Right cardiac atrium (tissue), 5 donors: ENCODE measurements at regions of chr5 and their contacts with region 1.

Region 1: DNA sequence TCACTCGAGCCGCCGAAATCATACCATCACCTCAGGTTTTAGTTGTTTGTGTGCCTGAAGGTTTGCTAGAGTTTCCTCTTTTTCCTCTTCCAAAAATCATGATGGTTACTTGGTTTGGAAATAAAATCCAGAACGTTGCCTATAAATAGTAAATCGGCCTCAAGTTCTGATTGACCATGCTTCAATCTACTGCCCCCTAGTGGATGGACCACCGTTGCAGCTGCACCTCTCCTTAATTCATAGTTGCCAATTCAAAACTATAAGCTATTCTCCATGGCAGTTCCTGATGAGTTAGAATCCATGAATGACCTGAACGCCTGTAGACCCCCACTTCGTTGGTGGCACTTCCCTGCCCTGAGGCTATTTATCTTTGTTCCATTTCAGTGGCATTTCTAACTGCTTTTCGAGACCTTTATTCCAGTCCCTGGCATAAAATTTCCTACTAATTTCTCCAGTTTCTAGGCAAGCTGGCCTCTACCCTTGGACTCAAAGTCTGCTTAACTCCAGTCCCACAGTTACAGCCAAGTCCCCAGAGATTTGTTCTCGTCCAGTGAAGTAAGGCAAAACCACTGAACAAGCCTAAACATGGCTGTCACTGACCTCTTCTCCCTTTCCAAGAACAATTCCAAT is 422.6 kb downstream of the EFNA5 start:
- DNase-seq: peak; percentile 48 to 70 (median 56)
- ATAC-seq: peak in 1 of 2 donors; percentile 29
- H3K4me3 ChIP-seq: no peak overlapping the region
- H3K27ac ChIP-seq: no peak overlapping the region
- H3K4me1 ChIP-seq: no peaks in the 10 kb centered on the region
- H3K27me3 ChIP-seq: no peaks in the 10 kb centered on the region

Region 2: DNA sequence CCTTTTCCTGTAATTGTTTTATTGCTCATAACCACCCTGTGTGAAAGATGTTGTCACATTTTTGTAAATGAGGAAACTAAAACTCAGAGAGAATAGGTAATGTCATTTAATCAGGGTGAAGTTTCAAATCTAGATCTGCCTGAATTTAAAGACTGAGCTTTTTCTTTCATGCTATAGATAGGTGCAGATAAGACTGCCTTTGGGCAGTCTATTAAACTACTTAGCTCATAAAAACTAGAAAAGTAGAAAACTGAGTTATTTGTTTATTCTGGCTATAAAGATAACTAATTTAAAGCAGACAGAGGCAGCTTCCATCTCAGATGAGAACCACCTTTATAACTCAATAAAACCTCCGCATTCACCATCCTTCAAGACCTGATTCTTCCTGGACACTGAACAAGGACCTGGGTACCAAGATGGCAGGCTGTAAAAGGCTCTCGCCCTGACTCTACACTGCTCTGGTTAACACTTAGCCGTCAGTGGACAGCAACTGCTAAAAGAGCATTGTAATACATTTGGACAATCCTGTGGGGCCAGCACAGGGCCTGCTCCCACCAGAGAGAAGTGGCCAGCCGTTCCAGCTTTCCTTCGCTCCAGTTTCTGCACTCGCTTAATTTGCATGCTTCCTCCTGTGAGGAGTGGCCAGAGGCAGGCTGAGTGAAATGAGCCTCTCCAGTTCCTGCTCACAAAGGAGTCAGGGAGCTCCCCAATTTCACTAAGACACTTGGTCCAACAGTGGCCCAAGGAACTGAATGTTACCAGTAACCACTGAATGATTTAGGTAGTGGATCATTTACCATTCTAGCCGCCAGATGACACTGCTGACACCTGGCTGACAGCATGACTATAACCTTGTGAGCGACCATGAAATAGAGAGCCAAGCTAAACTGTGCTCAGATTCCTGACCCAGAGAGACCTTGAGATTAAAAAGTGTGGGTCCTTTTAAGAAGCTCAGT is 143.9 kb before region 1 on chr5:
- intact Hi-C with region 1: loop called in 1 of 4 experiments (anchors 5 kb)
- DNase-seq: peak in 2 of 3 donors; percentile 12 to 43
- ATAC-seq: peak; percentile 81 to 86
- H3K4me3 ChIP-seq: no peak overlapping the region
- H3K27ac ChIP-seq: peak overlapping the region; percentile 23
- H3K4me1 ChIP-seq: no peaks in the 10 kb centered on the region
- H3K27me3 ChIP-seq: no peaks in the 10 kb centered on the region